Sigmoid colon (tissue), 7 donors: ENCODE measurements at regions of chr4 and their contacts with region 1.

Region 1: GRCh38 chr4:99615170-99615820 is 40.7 kb downstream of the MTTP start:
- DNase-seq: peak; percentile 57
- H3K4me3 ChIP-seq: no peak overlapping the region
- H3K27ac ChIP-seq: peak overlapping the region; percentile 14 to 72 (median 70)
- H3K4me1 ChIP-seq: peaks cover 0 to 36% (median 28%) of the 10 kb centered on the region in 4 donors
- H3K27me3 ChIP-seq: no peaks in the 10 kb centered on the region
- CTCF ChIP-seq: peak in 1 of 4 experiments; percentile 16
- EP300 ChIP-seq: peak in 1 of 4 donors; percentile 34
- POLR2A ChIP-seq: no peak

Region 2: GRCh38 chr4:99574530-99575324 is 40.6 kb before region 1 on chr4 and contains the start of gene MTTP:
- intact Hi-C with region 1: loop called (anchors 5 kb)
- DNase-seq: no peak
- H3K4me3 ChIP-seq: peak within 1 kb of the TSS in 2 of 4 donors; percentile 10 to 15
- H3K27ac ChIP-seq: peak within 1 kb of the TSS in 3 of 4 donors; percentile 64 to 92 (median 89)
- H3K4me1 ChIP-seq: peaks cover 0 to 35% (median 16%) of the 10 kb centered on the region in 4 donors
- H3K27me3 ChIP-seq: no peaks in the 10 kb centered on the region
- CTCF ChIP-seq: no peak
- EP300 ChIP-seq: no peak
- POLR2A ChIP-seq: no peak
- total RNA-seq, gene MTTP: 2.4 to 12.8 (median 5.9) TPM

Region 3: GRCh38 chr4:99763635-99764101 is 148.4 kb after region 1 on chr4:
- intact Hi-C with region 1: no loop called
- DNase-seq: no peak
- H3K4me3 ChIP-seq: no peak overlapping the region
- H3K27ac ChIP-seq: peak overlapping the region; percentile 28 to 65 (median 44)
- H3K4me1 ChIP-seq: peaks cover 0 to 34% (median 24%) of the 10 kb centered on the region in 4 donors
- H3K27me3 ChIP-seq: no peaks in the 10 kb centered on the region
- CTCF ChIP-seq: no peak
- EP300 ChIP-seq: no peak
- POLR2A ChIP-seq: no peak